ENCODE measurements at regions of chr2 and their contacts with region 1.

Region 1: DNA sequence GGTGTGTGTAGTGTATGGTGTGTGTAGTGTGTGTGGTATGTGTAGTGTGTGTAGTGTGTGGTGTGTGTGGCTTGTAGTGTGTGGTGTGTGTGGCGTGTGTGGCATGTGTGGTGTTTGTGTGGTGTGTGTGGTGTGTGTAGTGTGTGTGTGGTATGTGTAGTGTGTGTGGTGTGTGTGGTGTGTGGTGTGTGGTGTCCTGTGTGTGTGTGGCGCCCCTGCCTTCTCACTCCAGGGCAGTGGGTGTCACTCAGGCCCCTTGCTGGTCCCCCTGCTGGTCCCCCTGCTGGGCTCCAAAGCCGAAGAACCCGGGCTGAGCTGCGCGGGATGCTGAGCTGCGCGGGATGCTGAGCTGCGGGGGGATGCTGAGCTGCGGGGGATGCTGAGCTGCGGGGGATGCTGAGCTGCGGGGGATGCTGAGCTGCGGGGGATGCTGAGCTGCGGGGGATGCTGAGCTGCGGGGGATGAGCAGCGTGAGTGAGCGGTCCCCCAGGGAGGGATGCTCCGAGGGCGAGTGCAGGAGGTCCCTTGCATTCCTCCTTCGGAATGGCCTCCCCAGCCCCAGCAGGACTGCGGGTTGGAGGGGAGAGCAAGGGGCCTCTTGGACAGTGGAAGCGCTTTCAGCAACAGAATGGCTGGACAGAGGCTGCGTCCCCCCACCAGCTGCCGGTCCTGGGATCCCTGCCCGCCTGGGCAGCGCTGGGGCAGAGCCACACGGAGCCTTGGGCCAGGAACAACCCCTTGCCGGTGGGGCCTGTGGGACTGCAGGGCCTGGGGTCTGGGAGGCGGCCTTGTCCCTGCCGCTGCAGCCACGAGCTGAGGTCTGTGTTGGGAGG is 3.4 kb upstream of the RTP5 start:
- DNase-seq: peak; percentile 55 to 82 (median 62)
- H3K4me3 ChIP-seq: no peak overlapping the region
- H3K27ac ChIP-seq: no peak overlapping the region
- H3K4me1 ChIP-seq: peaks cover 0 to 46% (median 38%) of the 10 kb centered on the region in 4 experiments
- H3K27me3 ChIP-seq: peaks cover 0 to 46% (median 0%) of the 10 kb centered on the region in 5 experiments

Region 2: DNA sequence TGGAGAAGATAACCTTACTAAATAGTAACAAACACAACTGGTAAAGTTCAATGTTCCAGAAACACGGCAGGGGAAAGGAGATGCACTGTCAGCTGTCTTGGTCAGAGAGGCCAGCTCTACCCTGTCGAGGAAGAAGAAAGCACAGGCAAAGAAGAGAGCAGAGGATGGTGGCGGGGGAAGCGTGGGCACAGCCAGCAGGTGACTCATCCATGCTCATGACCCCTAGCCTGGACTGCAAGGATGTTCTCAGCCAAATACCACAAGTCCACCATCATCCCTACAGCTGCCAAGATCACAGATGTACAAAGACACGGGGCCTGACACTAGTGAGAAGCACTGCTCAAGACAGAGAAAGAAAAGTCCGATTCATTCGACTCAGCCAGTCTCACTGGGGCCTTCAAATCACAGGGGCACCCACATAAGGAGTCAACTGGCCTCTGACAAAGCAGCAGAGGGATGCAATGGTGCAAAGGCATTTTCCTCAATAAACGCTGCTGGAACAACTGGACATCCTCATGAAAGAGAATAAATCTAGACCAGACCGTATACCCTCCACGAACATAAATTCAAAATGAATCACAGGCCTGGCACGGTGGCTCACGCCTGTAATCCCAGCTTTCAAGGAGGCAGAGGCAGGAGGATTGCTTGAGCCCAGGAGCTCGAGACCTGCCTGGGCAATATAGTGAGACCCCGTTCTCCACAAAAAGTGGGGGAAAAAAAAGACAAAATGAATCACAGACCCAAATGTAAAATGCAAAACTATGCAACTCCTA is 185.2 kb before region 1 on chr2:
- CTCF ChIA-PET with region 1: no interaction called
- POLR2A ChIA-PET with region 1: no interaction called
- DNase-seq: no peak
- H3K4me3 ChIP-seq: no peak overlapping the region
- H3K27ac ChIP-seq: no peak overlapping the region
- H3K4me1 ChIP-seq: peaks cover 4 to 8% (median 6%) of the 10 kb centered on the region in 4 experiments
- H3K27me3 ChIP-seq: no peaks in the 10 kb centered on the region

Region 3: DNA sequence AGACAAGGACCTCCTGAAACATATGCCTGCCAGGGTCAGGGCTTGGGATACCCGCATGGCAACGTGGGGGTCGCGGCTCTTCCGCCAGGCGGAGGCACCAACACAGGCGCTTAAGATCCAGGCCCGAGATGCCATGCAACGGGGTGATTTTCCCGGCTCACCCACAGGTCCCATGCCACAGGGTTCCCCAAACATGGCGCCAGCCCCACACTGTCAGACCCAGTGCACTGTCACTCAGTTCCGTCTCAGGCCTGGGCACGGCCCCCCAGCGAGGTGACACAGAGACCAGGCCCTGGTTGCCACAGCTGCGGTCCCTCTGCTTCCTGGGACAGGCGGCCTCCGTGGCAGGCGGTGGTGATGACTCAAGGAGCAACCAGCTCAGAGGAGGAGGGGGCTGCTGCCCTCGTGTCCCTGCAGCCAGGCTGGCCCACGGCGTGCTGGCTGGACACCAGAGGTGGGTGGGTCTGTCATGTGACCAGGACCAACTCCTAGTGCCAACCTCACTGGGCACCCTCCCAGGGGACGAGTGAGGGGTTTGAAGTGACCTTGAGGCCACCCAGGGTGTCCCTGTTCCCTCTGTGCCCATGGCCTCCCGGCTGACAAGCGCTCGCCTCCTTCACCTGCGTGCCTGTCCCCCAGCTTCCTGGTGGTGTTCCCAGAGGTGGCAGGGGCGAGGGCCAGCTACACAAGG is 12.4 kb before region 1 on chr2:
- CTCF ChIA-PET with region 1: interaction called, 11 read pairs
- POLR2A ChIA-PET with region 1: interaction called, 4 read pairs
- DNase-seq: peak in 2 of 3 donors; percentile 50 to 60
- H3K4me3 ChIP-seq: no peak overlapping the region
- H3K27ac ChIP-seq: no peak overlapping the region
- H3K4me1 ChIP-seq: peaks cover 0 to 28% (median 21%) of the 10 kb centered on the region in 4 experiments
- H3K27me3 ChIP-seq: no peaks in the 10 kb centered on the region

Region 4: DNA sequence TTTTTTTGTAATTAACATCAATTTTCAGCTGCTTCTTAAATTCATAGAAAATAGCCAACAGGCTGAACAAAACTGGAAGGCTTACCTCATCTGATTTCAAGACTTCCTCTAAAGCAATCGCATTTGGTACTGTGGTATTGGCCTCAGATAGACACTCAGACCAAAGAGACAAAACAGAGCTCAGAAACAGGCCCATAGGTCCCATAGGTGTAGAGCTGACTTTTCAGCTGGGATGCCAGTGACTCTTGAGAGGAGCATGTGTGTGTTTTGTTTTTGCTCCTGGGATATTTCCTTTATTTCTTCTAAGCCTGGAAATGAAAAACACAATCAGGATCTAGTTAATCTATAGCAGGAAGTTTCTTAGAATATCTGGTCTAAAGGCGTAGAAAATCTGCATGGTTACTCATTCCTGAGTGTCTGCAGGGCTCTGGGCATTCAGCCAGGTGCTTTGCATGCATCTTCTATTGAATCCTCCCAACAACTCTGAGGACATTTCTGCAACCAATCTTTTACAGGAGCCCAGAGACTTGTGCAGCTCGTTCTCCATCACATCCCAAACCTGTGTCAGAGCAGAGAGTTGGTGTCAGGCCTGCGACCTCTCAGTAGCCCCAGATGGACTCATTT is 194.2 kb after region 1 on chr2:
- CTCF ChIA-PET with region 1: no interaction called
- POLR2A ChIA-PET with region 1: no interaction called
- DNase-seq: no peak
- H3K4me3 ChIP-seq: no peak overlapping the region
- H3K27ac ChIP-seq: no peak overlapping the region
- H3K4me1 ChIP-seq: no peaks in the 10 kb centered on the region
- H3K27me3 ChIP-seq: peaks cover 3 to 34% (median 16%) of the 10 kb centered on the region in 5 experiments

Region 5: DNA sequence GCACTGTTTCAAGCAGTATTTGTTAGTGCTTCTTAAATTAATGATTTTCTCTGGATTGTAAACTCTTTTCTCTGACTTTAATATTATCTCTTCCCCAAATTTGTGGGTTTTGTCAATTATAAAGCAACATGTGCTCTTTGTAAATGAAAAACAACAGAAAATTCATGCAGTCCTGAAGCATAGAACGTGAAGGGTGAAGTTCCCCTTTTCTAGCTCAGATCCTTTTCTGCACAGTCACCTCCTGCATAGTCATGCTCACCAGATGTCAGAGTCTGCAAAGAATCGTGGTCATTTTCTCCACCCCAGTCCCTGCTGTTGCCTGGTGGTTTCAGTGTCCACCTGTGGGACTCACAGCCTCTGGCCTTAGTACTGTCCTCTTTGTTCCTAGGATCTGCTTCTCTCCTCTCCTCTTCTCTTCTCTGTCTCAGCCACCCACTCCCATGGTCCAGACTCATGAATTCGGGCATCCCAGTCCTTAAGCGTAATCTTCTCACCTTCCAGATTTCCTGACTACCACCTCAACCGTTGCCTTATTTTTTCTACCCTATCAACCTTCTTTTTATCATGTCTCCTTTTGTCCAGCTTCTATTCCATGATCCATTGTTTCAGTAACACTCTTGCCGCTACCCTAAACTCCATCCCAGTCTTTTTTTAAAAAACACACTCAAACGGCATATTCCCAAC is 232.4 kb after region 1 on chr2:
- CTCF ChIA-PET with region 1: no interaction called
- POLR2A ChIA-PET with region 1: no interaction called
- DNase-seq: peak; percentile 83 to 96 (median 94)
- H3K4me3 ChIP-seq: peak overlapping the region in 4 of 7 experiments; percentile 25 to 46 (median 40)
- H3K27ac ChIP-seq: peak overlapping the region in 1 of 2 experiments; percentile 86
- H3K4me1 ChIP-seq: peaks cover 11 to 26% (median 19%) of the 10 kb centered on the region in 4 experiments
- H3K27me3 ChIP-seq: no peaks in the 10 kb centered on the region

Measured in common myeloid progenitor, CD34-positive (primary cell).